Ascending aorta (tissue), 2 donors: ENCODE measurements at regions of chr17 and their contacts with region 1.

Region 1: DNA sequence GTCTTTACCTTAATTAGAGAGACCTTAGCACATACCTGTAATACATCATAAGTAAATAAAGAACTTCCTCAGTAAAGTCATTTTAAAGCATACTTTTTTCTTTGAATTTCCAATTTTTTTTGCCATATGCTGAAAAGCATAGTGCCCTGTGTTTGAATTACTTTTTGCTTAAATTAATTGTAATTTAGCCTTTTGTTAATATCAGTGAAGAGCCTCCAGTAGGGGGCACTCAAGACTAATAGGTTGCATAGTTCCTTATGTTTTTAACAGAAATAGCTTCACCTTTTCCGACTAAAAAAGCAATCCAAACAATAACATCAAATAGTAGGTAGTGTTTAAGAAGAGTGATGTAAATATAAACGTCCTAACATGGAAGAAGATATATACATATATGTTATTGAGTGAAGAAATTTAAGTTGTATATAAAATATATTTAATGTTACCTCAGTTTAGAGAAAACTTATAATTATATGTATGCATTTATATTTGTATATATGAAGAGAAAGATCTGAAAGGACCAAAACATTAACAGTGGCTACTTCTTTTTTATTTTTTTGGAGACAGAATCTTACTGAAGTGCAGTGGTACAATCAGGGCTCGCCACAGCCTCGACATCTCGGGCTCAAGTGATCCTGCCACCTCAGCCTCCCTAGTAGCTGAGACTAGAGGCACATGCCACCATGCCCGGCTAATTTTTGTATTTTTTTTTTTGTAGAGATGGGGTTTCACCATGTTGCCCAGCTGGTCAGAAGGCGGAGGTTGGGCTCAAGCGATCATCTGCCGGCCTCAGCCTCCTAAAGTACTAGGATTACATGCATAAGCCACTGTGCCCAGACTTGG is 18.8 kb downstream of the RAD51C start:
- DNase-seq: no peak
- H3K4me3 ChIP-seq: no peak overlapping the region
- H3K27ac ChIP-seq: no peak overlapping the region
- H3K4me1 ChIP-seq: no peaks in the 10 kb centered on the region
- H3K27me3 ChIP-seq: no peaks in the 10 kb centered on the region
- CTCF ChIP-seq: peak; percentile 27 to 70 (median 44)

Region 2: GRCh38 chr17:59004338-59005111 is 293.4 kb after region 1 on chr17:
- intact Hi-C with region 1: loop called (anchors 2 kb)
- DNase-seq: peak in 1 of 2 donors; percentile 78
- H3K4me3 ChIP-seq: no peak overlapping the region
- H3K27ac ChIP-seq: no peak overlapping the region
- H3K4me1 ChIP-seq: no peaks in the 10 kb centered on the region
- H3K27me3 ChIP-seq: no peaks in the 10 kb centered on the region
- CTCF ChIP-seq: peak; percentile 79 to 93 (median 91)